HCT116 (cell line): ENCODE measurements at regions of chr2 and their contacts with region 1.

Region 1: GRCh38 chr2:177000357-177001072 is 212.1 kb upstream of the HNRNPA3 start:
- DNase-seq: no peak
- ATAC-seq: no peak
- H3K4me3 ChIP-seq: no peak overlapping the region
- H3K27ac ChIP-seq: no peak overlapping the region
- H3K4me1 ChIP-seq: peaks cover 0 to 19% of the 10 kb centered on the region in 2 experiments; a peak in 3 of 4 replicates
- H3K27me3 ChIP-seq: no peaks in the 10 kb centered on the region; the same call in 1 of the 2 replicates
- CTCF ChIP-seq: no peak
- POLR2A ChIP-seq: no peak
- RAD21 ChIP-seq: no peak

Region 2: GRCh38 chr2:176709149-176709951 is 291.2 kb before region 1 on chr2:
- CTCF ChIA-PET with region 1: no interaction called
- POLR2A ChIA-PET with region 1: no interaction called
- RAD21 ChIA-PET with region 1: no interaction called
- intact Hi-C with region 1: no loop called
- DNase-seq: no peak
- ATAC-seq: no peak
- H3K4me3 ChIP-seq: no peak overlapping the region
- H3K27ac ChIP-seq: no peak overlapping the region
- H3K4me1 ChIP-seq: no peaks in the 10 kb centered on the region
- H3K27me3 ChIP-seq: peaks cover 53% of the 10 kb centered on the region
- CTCF ChIP-seq: no peak
- POLR2A ChIP-seq: no peak
- RAD21 ChIP-seq: no peak

Region 3: GRCh38 chr2:177538323-177538722 is 537.8 kb after region 1 on chr2:
- CTCF ChIA-PET with region 1: no interaction called
- POLR2A ChIA-PET with region 1: no interaction called
- RAD21 ChIA-PET with region 1: no interaction called
- intact Hi-C with region 1: loop called (anchors 5 kb)
- DNase-seq: no peak
- ATAC-seq: no peak
- H3K4me3 ChIP-seq: no peak overlapping the region
- H3K27ac ChIP-seq: no peak overlapping the region
- H3K4me1 ChIP-seq: no peaks in the 10 kb centered on the region
- H3K27me3 ChIP-seq: no peaks in the 10 kb centered on the region
- CTCF ChIP-seq: no peak
- POLR2A ChIP-seq: no peak
- RAD21 ChIP-seq: no peak